B cell (primary cell): ENCODE measurements at regions of chr18 and their contacts with region 1.

Region 1: DNA sequence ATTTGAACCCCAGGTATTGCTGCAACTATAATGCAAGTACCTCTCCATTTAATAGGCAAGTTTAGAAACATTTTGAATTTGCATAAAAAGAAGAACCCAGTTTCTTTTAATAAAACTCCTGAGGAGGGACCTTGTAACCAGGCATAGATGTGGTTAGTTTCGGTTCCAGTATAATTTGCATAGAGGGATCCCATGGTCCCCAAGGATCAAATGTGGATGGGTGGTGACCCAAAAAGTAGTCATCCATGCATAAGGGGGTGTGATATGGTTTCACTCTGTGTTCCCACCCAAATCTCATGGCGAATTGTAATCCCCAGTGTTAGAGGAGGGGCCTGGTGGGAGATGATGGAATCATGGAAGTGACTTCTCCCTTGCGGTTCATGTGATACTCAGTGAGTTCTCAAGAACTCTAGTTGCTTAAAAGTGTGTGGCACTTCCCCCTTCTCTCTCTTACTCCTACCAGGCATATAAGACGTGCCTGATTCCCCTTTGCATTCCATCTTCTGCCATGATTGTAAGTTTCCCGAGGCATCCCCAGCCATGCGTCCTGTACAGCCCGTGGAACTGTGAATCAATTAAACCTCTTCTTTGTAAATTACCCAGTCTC is 40.2 kb upstream of the SKA1 start:
- DNase-seq: peak; percentile 82
- ATAC-seq: peak; percentile 98
- H3K4me3 ChIP-seq: peak overlapping the region in 3 of 5 experiments; percentile 19 to 57 (median 30)
- H3K4me3 Mint-ChIP-seq: peak overlapping the region; percentile 62
- H3K27ac ChIP-seq: no peak overlapping the region
- H3K27ac Mint-ChIP-seq: peak overlapping the region; percentile 71
- H3K4me1 ChIP-seq: peaks cover 67 to 72% of the 10 kb centered on the region in 2 donors
- H3K4me1 Mint-ChIP-seq: peaks cover 75% of the 10 kb centered on the region
- H3K27me3 ChIP-seq: peaks cover 0 to 5% (median 0%) of the 10 kb centered on the region in 4 experiments
- H3K27me3 Mint-ChIP-seq: peaks cover 3% of the 10 kb centered on the region
- CTCF ChIP-seq: no peak

Region 2: DNA sequence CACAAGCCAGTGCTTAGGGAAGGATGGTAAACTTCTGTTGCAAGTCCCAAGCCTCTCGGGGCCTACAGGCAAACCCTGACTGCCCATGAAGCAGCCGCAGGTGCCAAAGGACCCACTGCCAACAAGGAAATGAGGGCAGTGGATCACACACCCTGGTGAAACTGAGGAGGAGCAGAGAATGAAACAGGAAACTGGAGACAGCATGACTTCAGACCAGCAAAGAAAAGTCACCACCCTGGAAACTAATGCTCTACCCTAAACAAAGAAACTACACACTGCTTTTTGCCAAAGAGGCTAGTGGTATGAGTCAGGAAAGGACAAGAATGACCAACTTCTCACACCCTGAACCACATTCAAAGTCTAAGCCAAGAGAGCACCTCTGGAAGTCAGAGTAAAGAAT is 236.9 kb before region 1 on chr18:
- CTCF ChIA-PET with region 1: no interaction called
- POLR2A ChIA-PET with region 1: no interaction called
- intact Hi-C with region 1: no loop called
- DNase-seq: no peak
- ATAC-seq: no peak
- H3K4me3 ChIP-seq: no peak overlapping the region
- H3K4me3 Mint-ChIP-seq: no peak overlapping the region
- H3K27ac ChIP-seq: no peak overlapping the region
- H3K27ac Mint-ChIP-seq: no peak overlapping the region
- H3K4me1 ChIP-seq: no peaks in the 10 kb centered on the region
- H3K4me1 Mint-ChIP-seq: no peaks in the 10 kb centered on the region
- H3K27me3 ChIP-seq: no peaks in the 10 kb centered on the region
- H3K27me3 Mint-ChIP-seq: peaks cover 40% of the 10 kb centered on the region
- CTCF ChIP-seq: no peak

Region 3: DNA sequence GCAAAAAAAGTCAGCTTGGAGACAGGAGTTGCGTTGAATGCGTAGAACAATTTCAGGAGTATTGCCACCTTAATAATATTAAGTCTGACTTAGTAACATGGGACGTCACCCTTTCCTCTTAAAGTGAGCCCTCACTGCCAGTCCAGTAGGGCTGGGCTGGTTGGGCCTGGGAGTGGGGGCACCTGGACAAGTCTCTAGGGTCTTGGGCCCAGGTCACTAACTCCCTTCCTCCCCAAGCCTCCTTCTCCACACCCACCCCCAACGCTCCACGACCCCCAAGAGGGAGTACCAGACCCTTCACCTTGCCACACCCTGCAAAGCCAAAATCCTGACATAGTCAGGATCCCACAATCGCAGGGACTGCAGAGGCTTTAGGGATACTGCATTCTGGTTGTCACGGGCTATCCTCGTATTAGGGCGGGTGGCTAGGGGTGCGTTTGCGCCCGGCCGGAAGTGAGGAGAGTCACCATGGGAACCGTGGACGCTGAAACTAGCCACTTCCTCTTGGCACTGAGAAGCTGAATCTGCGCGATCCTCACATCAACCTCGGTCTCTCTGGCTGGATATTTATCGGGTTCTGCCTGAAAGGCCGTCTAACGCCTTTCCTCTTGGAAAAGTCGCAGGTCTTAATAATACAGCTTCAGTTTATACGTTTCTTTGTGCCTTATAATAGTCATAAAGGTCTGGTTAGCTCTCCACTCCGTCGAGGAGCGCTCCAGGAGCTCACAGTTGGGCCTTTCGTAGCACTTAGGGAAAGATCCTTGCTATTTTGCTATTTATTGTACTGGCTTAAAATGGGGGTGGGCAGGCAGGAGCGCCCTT is 36.8 kb before region 1 on chr18:
- CTCF ChIA-PET with region 1: no interaction called
- POLR2A ChIA-PET with region 1: no interaction called
- intact Hi-C with region 1: loop called (anchors 1 kb)
- DNase-seq: peak; percentile 92
- ATAC-seq: peak; percentile 98
- H3K4me3 ChIP-seq: peak overlapping the region; percentile 31 to 50 (median 47)
- H3K4me3 Mint-ChIP-seq: peak overlapping the region; percentile 88
- H3K27ac ChIP-seq: no peak overlapping the region
- H3K27ac Mint-ChIP-seq: peak overlapping the region; percentile 77
- H3K4me1 ChIP-seq: peaks cover 13 to 14% of the 10 kb centered on the region in 2 donors
- H3K4me1 Mint-ChIP-seq: peaks cover 13% of the 10 kb centered on the region
- H3K27me3 ChIP-seq: peaks cover 0 to 5% (median 2%) of the 10 kb centered on the region in 4 experiments
- H3K27me3 Mint-ChIP-seq: peaks cover 7% of the 10 kb centered on the region
- CTCF ChIP-seq: no peak

Region 4: DNA sequence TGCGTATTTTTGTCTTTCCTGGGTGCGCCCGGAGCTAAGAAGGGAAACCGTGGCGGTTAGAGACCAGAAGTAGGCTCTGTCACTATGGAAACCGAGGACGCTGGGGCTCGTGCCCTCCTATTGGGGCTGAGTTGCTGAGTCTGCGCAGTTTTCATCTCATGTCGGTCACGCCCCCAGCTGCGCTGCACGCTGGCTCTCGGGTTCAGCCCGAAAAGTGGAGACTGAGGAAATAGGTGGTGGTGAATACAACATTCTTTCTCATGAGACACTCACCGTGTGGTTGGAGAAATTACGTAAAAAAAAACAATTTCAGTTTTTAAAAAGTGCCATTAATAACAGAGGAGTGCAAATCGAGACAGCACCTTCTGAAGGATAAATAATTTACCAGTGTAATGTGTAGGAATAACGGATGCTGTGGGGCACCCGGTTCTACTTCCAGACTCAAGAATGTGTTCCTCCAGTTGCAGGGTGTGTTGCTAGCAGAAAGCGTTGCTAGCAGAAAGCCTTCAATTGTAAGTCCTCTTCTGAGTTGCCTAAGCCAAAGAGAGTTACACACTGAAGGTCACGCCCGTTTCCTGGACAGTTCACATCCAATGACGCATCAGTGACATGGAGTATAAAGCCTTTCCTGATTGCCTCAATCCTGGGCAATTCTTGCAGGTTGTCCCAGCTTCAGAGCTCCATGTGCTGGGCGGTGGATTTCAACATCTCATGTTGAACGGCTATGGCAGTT is 26.7 kb before region 1 on chr18:
- CTCF ChIA-PET with region 1: interaction called, 7 read pairs
- POLR2A ChIA-PET with region 1: no interaction called
- intact Hi-C with region 1: loop called (anchors 1 kb)
- DNase-seq: peak; percentile 92
- ATAC-seq: peak; percentile 98
- H3K4me3 ChIP-seq: peak overlapping the region; percentile 30 to 70 (median 61)
- H3K4me3 Mint-ChIP-seq: peak overlapping the region; percentile 99
- H3K27ac ChIP-seq: peak overlapping the region; percentile 3 to 56
- H3K27ac Mint-ChIP-seq: peak overlapping the region; percentile 87
- H3K4me1 ChIP-seq: peaks cover 33 to 42% of the 10 kb centered on the region in 2 donors
- H3K4me1 Mint-ChIP-seq: peaks cover 38% of the 10 kb centered on the region
- H3K27me3 ChIP-seq: peaks cover 0 to 2% (median 0%) of the 10 kb centered on the region in 4 experiments
- H3K27me3 Mint-ChIP-seq: peaks cover 4% of the 10 kb centered on the region
- CTCF ChIP-seq: no peak